ENCODE measurements at regions of chr13 and their contacts with region 1.

Region 1: DNA sequence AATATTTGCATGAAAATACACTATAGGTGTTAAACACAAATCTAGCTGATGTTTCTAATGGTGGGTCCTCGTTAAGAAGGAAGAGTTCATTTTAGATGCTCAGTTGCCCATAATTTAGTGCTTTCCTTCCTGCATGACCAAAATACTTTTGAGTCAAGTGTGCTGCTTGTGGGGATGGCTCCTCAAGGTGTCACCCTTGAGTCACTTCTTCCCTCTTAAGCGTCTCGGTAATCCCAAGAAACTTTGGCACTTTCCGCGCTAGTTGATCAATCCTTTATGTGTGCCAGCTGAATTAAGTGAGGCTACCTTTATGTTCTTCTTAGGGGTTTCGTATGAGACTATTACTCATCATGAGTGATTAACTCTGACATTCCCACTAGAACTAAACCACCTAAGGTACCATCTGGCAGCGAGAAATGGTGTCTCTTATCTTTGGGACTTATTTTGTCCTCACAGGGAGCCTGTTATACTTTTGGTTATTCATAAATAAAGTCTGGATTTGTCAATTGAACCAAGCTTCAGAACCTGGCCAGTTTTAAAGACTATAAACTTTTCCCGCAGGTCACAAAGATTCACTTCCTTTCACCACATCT is 106.8 kb downstream of the NHLRC3 start:
- DNase-seq: peak; percentile 64
- H3K4me3 Mint-ChIP-seq: no peak overlapping the region
- H3K27ac Mint-ChIP-seq: no peak overlapping the region
- H3K4me1 Mint-ChIP-seq: peaks cover 25% of the 10 kb centered on the region
- H3K27me3 Mint-ChIP-seq: peaks cover 33% of the 10 kb centered on the region

Region 2: DNA sequence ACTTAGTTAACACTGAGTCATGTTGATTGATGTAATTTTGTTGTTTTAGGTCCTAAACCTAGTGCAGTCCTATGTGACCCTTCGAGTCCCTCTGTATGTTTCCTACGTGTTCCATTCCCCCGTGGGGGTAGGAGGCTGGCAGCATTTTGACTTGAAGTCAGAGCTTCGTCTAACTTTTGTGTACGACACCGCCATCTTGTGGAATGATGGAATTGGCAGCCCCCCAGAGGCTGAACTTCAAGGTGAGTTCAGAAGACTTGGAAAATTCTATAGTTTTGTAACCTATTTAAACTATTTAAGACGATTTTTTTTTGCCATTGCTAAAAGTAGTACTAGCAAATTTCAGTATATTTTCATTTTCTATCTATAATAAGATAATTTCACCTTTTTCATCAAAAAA is 272.3 kb before region 1 on chr13:
- CTCF ChIA-PET with region 1: no interaction called
- intact Hi-C with region 1: no loop called
- DNase-seq: peak; percentile 66
- H3K4me3 Mint-ChIP-seq: no peak overlapping the region
- H3K27ac Mint-ChIP-seq: no peak overlapping the region
- H3K4me1 Mint-ChIP-seq: no peaks in the 10 kb centered on the region
- H3K27me3 Mint-ChIP-seq: peaks cover 14% of the 10 kb centered on the region

Region 3: DNA sequence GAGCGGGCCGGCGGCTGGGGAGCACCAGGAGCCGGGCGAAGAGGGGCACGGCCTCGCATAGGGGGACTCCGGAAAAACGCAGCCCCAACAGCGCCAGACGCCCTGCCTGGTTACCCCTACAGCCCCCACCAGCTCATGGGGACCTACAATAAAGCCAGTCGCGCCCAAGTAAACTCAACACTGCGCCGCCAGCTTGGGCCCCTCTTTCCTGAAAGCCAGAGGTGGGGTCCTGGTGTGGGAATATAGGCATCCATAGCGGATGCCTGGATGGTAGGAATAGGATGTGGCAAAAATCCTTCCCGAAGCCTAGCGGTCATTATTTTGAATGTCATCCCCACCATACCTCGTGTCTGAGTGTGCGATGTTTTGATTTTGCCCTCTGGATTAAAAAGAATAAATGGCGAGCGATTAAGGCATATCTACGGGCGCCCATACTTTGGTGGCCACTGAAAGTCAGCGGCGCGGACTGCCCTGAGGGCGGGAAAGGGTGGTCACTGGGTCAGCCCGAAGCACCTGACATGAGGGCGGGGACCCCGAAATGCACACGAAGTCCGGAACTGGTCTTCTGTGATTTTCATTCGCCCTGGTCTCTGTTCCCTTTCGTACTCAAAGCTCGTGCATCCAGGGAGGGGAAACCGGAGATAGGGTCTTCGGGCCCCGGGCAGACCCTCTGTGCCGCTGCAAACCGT is 107.0 kb before region 1 on chr13 and contains the starts of genes NHLRC3 and PROSER1:
- CTCF ChIA-PET with region 1: no interaction called
- intact Hi-C with region 1: no loop called
- DNase-seq: peak; percentile 86
- H3K4me3 Mint-ChIP-seq: peak within 1 kb of the TSS; percentile 90
- H3K27ac Mint-ChIP-seq: peak within 1 kb of the TSS; percentile 90
- H3K4me1 Mint-ChIP-seq: peaks cover 41% of the 10 kb centered on the region
- H3K27me3 Mint-ChIP-seq: no peaks in the 10 kb centered on the region
- total RNA-seq, gene NHLRC3: 12.0 to 13.1 TPM
- total RNA-seq, gene PROSER1: 73.4 to 78.8 TPM

Region 4: GRCh38 chr13:39051157-39051556 is 93.9 kb before region 1 on chr13:
- CTCF ChIA-PET with region 1: interaction called, 3 read pairs
- intact Hi-C with region 1: loop called (anchors 1 kb)
- DNase-seq: no peak
- H3K4me3 Mint-ChIP-seq: no peak overlapping the region
- H3K27ac Mint-ChIP-seq: no peak overlapping the region
- H3K4me1 Mint-ChIP-seq: peaks cover 14% of the 10 kb centered on the region
- H3K27me3 Mint-ChIP-seq: no peaks in the 10 kb centered on the region

Region 5: GRCh38 chr13:39095500-39095899 is 49.5 kb before region 1 on chr13:
- CTCF ChIA-PET with region 1: no interaction called
- intact Hi-C with region 1: loop called (anchors 5 kb)
- DNase-seq: no peak
- H3K4me3 Mint-ChIP-seq: peak overlapping the region; percentile 30
- H3K27ac Mint-ChIP-seq: peak overlapping the region; percentile 78
- H3K4me1 Mint-ChIP-seq: peaks cover 24% of the 10 kb centered on the region
- H3K27me3 Mint-ChIP-seq: no peaks in the 10 kb centered on the region

Region 6: GRCh38 chr13:39196958-39197646 is 52.1 kb after region 1 on chr13:
- CTCF ChIA-PET with region 1: no interaction called
- intact Hi-C with region 1: loop called (anchors 1 kb)
- DNase-seq: no peak
- H3K4me3 Mint-ChIP-seq: no peak overlapping the region
- H3K27ac Mint-ChIP-seq: peak overlapping the region; percentile 60
- H3K4me1 Mint-ChIP-seq: peaks cover 11% of the 10 kb centered on the region
- H3K27me3 Mint-ChIP-seq: peaks cover 17% of the 10 kb centered on the region

Region 7: DNA sequence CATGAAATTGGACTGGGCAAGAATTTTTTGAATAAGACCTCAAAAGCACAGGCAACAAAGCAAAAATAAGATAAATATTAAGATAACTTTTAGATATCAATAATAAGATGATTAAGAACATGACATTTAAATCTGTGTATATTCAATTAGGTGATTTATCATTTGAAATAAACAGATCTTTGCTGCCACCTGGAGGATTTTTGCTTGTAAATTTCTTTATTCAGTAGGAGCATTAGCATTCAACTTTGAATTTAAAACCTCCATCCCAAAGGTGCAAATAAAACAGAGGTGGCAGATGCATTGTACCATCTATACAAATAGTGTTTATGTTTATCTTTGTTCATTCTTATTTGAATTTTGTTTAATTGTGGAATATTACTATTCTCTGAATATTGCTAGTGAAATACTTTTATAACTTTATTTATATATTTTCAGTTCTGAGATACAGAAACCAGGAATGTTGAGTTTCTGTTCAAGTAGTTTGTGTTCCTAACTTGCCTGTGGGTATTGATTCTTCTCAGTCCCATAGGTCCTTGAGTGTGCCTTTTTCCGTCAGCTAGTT is 531.4 kb after region 1 on chr13:
- CTCF ChIA-PET with region 1: interaction called, 4 read pairs
- intact Hi-C with region 1: loop called (anchors 1 kb)
- DNase-seq: peak; percentile 23
- H3K4me3 Mint-ChIP-seq: no peak overlapping the region
- H3K27ac Mint-ChIP-seq: no peak overlapping the region
- H3K4me1 Mint-ChIP-seq: peaks cover 4% of the 10 kb centered on the region
- H3K27me3 Mint-ChIP-seq: no peaks in the 10 kb centered on the region

Measured in activated naive CD4-positive, alpha-beta T cell treated with anti-CD3 and anti-CD28 coated beads for 36 hours (primary cell).